Activated CD4-positive, alpha-beta memory T cell treated with anti-CD3 and anti-CD28 coated beads for 36 hours (primary cell): ENCODE measurements at regions of chr3 and their contacts with region 1.

Region 1: DNA sequence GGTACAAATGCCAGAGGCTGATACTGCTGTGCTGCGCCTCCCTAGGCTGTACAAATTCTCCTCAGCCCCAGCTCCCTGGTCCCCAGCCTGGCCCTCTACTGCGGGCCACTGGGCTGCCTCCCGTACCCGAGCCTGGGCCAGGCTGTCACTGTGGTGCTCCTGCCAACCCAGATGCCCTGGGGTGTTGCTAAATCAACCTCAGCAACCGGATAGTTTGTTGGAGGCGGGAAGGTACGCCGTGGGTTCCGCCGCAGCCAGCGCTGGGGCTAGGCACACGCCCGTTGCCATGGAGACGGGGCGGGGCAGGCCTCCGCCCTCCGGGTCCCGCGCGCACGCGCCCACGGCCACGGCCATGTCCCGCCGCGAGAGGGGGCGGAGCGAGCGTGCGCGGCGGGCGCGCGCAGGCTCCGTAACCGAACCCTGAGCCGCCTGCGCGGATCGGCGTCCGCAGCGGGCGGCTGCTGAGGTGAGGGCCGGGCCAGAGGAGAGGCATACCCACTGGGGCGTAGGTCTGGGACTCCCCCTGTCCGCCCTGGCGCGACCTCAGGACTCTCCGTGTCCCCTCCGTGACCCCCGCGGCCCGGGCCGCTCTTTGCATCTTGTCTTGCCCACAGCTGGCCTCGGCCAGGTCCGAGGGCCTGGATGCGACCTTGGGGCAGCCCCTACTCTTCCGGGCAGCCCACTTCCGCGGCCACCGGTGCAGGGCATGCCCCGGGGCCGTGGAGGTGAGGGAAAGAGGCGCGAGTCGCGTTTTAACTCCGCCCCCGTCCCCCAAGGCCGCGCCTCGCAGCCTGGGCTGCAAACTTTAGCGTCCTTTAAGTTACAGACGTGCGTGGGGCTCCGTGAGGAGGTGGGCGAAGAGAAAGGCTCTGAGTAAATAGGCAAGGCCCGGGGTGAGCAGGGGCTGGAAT is at the start of gene TEX264:
- DNase-seq: peak; percentile 92
- H3K4me3 Mint-ChIP-seq: peak within 1 kb of the TSS; percentile 87
- H3K27ac Mint-ChIP-seq: peak within 1 kb of the TSS; percentile 89
- H3K4me1 Mint-ChIP-seq: peaks cover 62% of the 10 kb centered on the region
- H3K27me3 Mint-ChIP-seq: no peaks in the 10 kb centered on the region
- total RNA-seq, gene TEX264: 44.9 to 45.2 TPM

Region 2: GRCh38 chr3:51384726-51385473 is 286.2 kb before region 1 on chr3 and contains the start of gene MANF:
- CTCF ChIA-PET with region 1: interaction called, 3 read pairs
- POLR2A ChIA-PET with region 1: interaction called, 4 read pairs
- intact Hi-C with region 1: loop called (anchors 2 kb)
- DNase-seq: peak; percentile 99
- H3K4me3 Mint-ChIP-seq: peak within 1 kb of the TSS; percentile 93
- H3K27ac Mint-ChIP-seq: peak within 1 kb of the TSS; percentile 98
- H3K4me1 Mint-ChIP-seq: peaks cover 50% of the 10 kb centered on the region
- H3K27me3 Mint-ChIP-seq: no peaks in the 10 kb centered on the region
- total RNA-seq, gene MANF: 151 to 162 TPM

Region 3: DNA sequence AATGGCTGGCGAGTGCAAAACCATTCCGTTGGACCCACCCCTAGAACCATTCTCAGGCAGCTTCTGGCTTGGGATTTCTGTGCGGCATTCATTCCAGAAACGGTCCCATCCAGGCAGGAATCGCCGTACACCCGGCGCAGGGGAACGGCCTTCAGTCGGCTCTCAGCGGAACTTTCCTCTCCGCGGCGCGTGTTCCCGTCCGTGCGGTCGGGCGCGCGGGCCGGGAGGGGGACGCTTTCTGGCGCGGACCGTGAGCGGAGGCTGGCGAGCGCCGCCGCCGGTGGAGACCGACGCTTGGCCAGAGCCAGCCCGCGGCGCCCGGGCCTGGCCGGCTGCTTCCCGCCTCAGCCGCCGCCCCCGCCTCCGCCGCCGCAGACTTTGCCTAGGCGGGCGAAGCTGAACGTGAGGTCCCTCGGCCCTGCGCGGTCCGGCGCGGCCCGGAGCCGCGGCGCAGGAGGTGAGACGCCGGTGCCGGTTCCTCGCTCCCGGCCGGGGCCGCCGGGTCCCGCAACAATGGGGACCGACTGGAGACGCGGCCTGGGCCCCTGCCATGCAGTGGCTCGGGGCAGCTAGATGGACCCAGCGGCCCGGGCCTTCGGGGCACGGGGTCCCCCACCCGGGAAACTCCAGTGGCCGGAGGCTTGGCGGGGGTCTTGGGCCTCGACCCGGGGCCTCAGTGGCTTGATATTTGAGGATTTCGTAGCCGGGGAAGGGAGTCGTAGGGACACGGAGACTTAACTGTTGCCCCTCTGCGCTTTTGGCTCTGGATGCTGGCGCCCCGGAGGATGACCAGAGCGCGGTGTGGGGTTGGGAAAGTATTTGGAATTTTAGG is 132.4 kb before region 1 on chr3 and contains the start of gene RAD54L2:
- CTCF ChIA-PET with region 1: interaction called, 15 read pairs
- POLR2A ChIA-PET with region 1: no interaction called
- intact Hi-C with region 1: no loop called
- DNase-seq: peak; percentile 83
- H3K4me3 Mint-ChIP-seq: peak within 1 kb of the TSS; percentile 88
- H3K27ac Mint-ChIP-seq: peak within 1 kb of the TSS; percentile 87
- H3K4me1 Mint-ChIP-seq: peaks cover 28% of the 10 kb centered on the region
- H3K27me3 Mint-ChIP-seq: no peaks in the 10 kb centered on the region
- total RNA-seq, gene RAD54L2: 27.6 to 30.0 TPM

Region 4: GRCh38 chr3:51682079-51682478 is 11.0 kb after region 1 on chr3:
- CTCF ChIA-PET with region 1: interaction called, 168 read pairs
- POLR2A ChIA-PET with region 1: interaction called, 14 read pairs
- intact Hi-C with region 1: loop called (anchors 1 kb)
- DNase-seq: peak; percentile 86
- H3K4me3 Mint-ChIP-seq: no peak overlapping the region
- H3K27ac Mint-ChIP-seq: peak overlapping the region; percentile 79
- H3K4me1 Mint-ChIP-seq: peaks cover 83% of the 10 kb centered on the region
- H3K27me3 Mint-ChIP-seq: no peaks in the 10 kb centered on the region

Region 5: GRCh38 chr3:51739110-51739509 is 68.0 kb after region 1 on chr3:
- CTCF ChIA-PET with region 1: no interaction called
- POLR2A ChIA-PET with region 1: no interaction called
- intact Hi-C with region 1: no loop called
- DNase-seq: no peak
- H3K4me3 Mint-ChIP-seq: no peak overlapping the region
- H3K27ac Mint-ChIP-seq: no peak overlapping the region
- H3K4me1 Mint-ChIP-seq: peaks cover 10% of the 10 kb centered on the region
- H3K27me3 Mint-ChIP-seq: peaks cover 23% of the 10 kb centered on the region

Region 6: DNA sequence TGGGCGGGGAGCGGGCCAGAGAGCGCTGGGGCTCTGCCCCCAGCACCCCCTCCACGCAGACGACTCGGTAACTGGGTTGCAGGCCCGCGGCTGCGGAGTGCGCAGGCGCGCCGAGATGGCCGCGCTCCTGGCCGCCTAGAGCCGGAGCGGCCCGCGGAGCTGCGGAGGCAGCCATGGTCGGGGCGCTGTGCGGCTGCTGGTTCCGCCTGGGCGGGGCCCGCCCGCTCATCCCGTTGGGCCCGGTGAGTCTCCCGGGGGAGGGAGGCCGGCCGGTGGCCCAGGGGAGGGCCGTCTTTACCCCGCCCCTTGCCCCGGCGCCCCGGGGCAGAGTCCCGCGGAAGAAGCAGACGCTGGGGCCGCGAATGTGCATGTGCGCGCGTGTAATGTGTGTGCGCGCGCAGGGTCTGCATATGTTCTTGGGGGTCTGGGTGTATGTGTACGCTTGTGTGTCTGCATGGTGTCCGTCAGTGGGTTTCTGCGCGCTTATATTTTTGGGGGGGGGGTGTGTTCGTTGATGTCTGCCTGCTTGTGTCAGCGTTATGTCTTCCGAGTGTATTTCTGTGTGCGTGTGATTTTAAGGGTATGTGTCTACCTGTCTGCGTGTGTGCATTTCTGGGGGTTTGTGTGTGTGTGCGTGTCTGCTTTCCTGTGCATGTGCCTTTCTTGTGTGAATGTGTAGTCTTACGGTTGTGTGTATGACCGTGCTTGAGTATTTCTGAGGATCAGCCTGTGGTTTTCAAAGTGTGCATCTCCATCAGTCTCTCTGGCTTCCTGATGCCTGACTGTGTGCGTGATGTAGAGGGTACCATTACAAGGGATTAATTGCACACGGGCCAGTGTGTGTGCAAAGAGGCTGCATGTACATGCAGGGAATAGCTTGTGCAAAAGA is 304.1 kb after region 1 on chr3 and contains the start of gene ABHD14A:
- CTCF ChIA-PET with region 1: no interaction called
- POLR2A ChIA-PET with region 1: no interaction called
- intact Hi-C with region 1: loop called (anchors 10 kb)
- DNase-seq: peak; percentile 79
- H3K4me3 Mint-ChIP-seq: peak within 1 kb of the TSS; percentile 99
- H3K27ac Mint-ChIP-seq: peak within 1 kb of the TSS; percentile 97
- H3K4me1 Mint-ChIP-seq: peaks cover 36% of the 10 kb centered on the region
- H3K27me3 Mint-ChIP-seq: no peaks in the 10 kb centered on the region
- total RNA-seq, gene ABHD14A: 7.9 to 8.6 TPM